ENCODE measurements at regions of chr6 and their contacts with region 1.

Region 1: GRCh38 chr6:74870403-74870802 is 335.4 kb downstream of the COL12A1 start:
- DNase-seq: no peak
- H3K4me3 Mint-ChIP-seq: no peak overlapping the region
- H3K27ac Mint-ChIP-seq: no peak overlapping the region
- H3K4me1 Mint-ChIP-seq: peaks cover 22% of the 10 kb centered on the region
- H3K27me3 Mint-ChIP-seq: no peaks in the 10 kb centered on the region
- CTCF ChIP-seq: no peak

Region 2: DNA sequence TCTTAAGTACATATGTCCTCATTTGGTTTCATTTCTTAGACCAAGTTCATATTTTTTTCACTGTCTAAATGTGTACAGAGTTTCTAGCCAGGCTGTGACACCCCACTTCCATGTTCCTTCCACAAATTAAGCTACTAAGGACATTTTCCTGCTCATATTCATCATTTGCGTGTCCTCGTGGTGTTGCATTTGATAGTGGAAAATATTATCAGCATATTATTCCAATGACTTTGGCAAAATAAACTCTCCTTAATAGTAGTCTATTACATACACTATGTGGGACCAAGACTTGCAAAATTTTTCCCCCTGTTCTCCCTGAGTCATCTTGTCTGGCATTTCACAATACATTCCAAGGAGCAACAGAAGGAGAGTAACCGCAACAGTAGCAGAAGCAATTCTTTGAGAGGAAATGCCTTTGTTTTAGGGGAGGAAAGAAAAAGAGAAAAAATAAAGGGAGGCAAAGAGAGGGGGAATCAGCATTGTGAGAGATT is 263.8 kb before region 1 on chr6:
- CTCF ChIA-PET with region 1: no interaction called
- POLR2A ChIA-PET with region 1: no interaction called
- intact Hi-C with region 1: loop called (anchors 10 kb)
- DNase-seq: peak; percentile 94
- H3K4me3 Mint-ChIP-seq: peak overlapping the region; percentile 15
- H3K27ac Mint-ChIP-seq: peak overlapping the region; percentile 67
- H3K4me1 Mint-ChIP-seq: peaks cover 39% of the 10 kb centered on the region
- H3K27me3 Mint-ChIP-seq: no peaks in the 10 kb centered on the region
- CTCF ChIP-seq: no peak

Region 3: DNA sequence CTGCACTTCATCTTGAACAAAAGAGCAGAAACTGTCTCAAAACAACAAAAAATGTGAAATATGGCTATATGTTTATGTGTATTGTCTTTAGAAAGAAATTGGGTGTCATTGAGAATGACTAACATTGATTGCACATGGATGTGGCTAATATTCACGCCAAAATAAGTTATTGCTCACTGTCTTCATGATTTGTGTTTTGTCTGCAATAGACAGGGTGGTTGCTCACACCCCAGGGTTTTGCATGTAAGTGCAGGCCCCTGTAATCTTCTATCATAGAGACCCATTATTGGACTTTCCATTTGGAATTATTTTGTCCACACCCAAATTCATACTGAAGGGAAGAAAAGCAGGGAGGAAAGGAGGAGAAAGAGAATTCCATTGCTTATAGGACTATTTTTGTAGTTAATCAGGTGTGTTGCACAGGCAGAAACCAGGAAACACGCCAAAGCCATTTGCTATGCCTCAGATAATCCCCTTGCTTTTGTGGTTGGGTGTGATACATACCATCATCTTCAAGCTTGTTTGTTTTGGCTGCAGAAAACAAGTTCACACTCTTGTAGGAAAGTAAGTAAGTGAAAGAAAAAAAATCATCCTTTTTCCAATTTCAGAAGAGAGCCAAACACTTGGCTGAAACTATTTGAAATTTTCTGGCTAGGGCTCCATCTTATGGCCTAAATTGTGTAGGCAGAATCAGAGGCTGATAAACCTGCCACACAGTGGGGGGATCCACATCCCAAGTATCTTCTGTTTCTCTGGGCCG is 121.3 kb after region 1 on chr6:
- CTCF ChIA-PET with region 1: interaction called, 3 read pairs
- POLR2A ChIA-PET with region 1: no interaction called
- intact Hi-C with region 1: loop called (anchors 10 kb)
- DNase-seq: peak; percentile 73
- H3K4me3 Mint-ChIP-seq: no peak overlapping the region
- H3K27ac Mint-ChIP-seq: peak overlapping the region; percentile 32
- H3K4me1 Mint-ChIP-seq: peaks cover 27% of the 10 kb centered on the region
- H3K27me3 Mint-ChIP-seq: no peaks in the 10 kb centered on the region
- CTCF ChIP-seq: peak; percentile 33

Region 4: DNA sequence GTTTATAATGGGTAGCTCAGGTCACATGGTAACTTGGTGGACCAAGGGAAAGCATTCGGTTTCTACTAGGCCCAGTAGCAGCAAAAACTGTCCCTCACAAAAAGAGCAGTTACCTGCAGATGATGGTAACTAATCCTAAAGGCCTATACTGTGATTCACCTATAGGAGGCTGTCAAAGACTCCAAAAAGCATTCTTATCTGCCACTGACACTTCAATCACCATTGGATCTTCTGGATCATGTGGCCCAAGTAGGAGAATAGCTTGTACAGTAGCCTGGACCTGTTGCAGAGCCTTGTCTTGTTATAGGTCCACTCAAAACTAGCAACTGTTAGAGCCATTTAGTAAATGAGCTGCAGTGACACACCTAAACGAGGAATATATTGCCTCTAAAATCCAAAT is 646.4 kb after region 1 on chr6:
- CTCF ChIA-PET with region 1: no interaction called
- POLR2A ChIA-PET with region 1: no interaction called
- intact Hi-C with region 1: no loop called
- DNase-seq: no peak
- H3K4me3 Mint-ChIP-seq: no peak overlapping the region
- H3K27ac Mint-ChIP-seq: no peak overlapping the region
- H3K4me1 Mint-ChIP-seq: no peaks in the 10 kb centered on the region
- H3K27me3 Mint-ChIP-seq: no peaks in the 10 kb centered on the region
- CTCF ChIP-seq: no peak

Measured in MCF 10A (cell line).